CD8-positive, alpha-beta T cell (primary cell): ENCODE measurements at regions of chr7 and their contacts with region 1.

Region 1: GRCh38 chr7:75914730-75915585 is at the start of gene POR:
- DNase-seq: peak; percentile 94 to 99 (median 98)
- ATAC-seq: peak; percentile 94
- H3K4me3 ChIP-seq: peak within 1 kb of the TSS; percentile 98 to 99
- H3K4me3 Mint-ChIP-seq: peak within 1 kb of the TSS; percentile 92
- H3K27ac ChIP-seq: peak within 1 kb of the TSS; percentile 92 to 97
- H3K27ac Mint-ChIP-seq: peak within 1 kb of the TSS; percentile 96
- H3K4me1 ChIP-seq: peaks cover 24% of the 10 kb centered on the region
- H3K4me1 Mint-ChIP-seq: peaks cover 37% of the 10 kb centered on the region
- H3K27me3 ChIP-seq: no peaks in the 10 kb centered on the region
- H3K27me3 Mint-ChIP-seq: no peaks in the 10 kb centered on the region
- CTCF ChIP-seq: no peak
- total RNA-seq, gene POR: 64.4 to 66.7 TPM

Region 2: GRCh38 chr7:75878769-75879611 is 36.0 kb before region 1 on chr7 and contains the start of gene RHBDD2:
- CTCF ChIA-PET with region 1: no interaction called
- POLR2A ChIA-PET with region 1: interaction called, 33 read pairs
- intact Hi-C with region 1: loop called (anchors 1 kb)
- DNase-seq: peak; percentile 95 to 98 (median 97)
- ATAC-seq: peak; percentile 93
- H3K4me3 ChIP-seq: peak within 1 kb of the TSS; percentile 69 to 100
- H3K4me3 Mint-ChIP-seq: peak within 1 kb of the TSS; percentile 93
- H3K27ac ChIP-seq: peak within 1 kb of the TSS; percentile 73 to 88
- H3K27ac Mint-ChIP-seq: peak within 1 kb of the TSS; percentile 89
- H3K4me1 ChIP-seq: peaks cover 18% of the 10 kb centered on the region
- H3K4me1 Mint-ChIP-seq: peaks cover 34% of the 10 kb centered on the region
- H3K27me3 ChIP-seq: no peaks in the 10 kb centered on the region
- H3K27me3 Mint-ChIP-seq: no peaks in the 10 kb centered on the region
- CTCF ChIP-seq: no peak
- total RNA-seq, gene RHBDD2: 167 to 173 TPM

Region 3: DNA sequence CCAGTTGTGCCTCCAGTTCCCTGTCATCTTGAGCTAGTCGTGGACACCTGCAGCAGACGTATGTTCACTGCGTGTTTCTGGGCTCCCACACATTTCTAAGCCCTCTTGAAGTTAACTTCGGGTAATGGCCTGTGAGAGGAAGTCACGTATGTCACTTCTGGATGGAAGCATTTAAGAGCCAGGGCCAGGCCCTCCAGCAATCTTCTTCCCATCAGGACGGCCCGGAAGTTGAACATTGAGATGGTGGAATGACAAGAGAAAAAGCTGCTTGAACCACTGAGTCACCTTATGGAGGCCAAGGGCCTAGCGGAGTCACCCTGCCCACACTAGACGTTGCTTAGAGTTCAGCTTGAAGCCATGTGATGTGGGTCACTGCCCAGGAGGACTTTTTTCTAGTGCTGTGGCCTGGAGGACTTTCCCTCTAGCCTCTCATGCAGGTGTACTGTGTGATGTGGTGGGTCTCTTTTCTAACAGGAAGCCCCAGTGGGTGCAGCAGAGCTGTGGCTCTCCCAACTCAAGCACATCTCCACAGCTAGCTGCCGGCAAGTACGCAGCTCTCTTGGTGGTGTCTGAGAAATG is 13.5 kb after region 1 on chr7:
- CTCF ChIA-PET with region 1: interaction called, 4 read pairs
- POLR2A ChIA-PET with region 1: interaction called, 10 read pairs
- intact Hi-C with region 1: no loop called
- DNase-seq: peak in 7 of 9 experiments; percentile 6 to 74 (median 55)
- ATAC-seq: peak; percentile 89
- H3K4me3 ChIP-seq: no peak overlapping the region
- H3K4me3 Mint-ChIP-seq: peak overlapping the region; percentile 60
- H3K27ac ChIP-seq: no peak overlapping the region
- H3K27ac Mint-ChIP-seq: peak overlapping the region; percentile 85
- H3K4me1 ChIP-seq: peaks cover 19% of the 10 kb centered on the region
- H3K4me1 Mint-ChIP-seq: peaks cover 29% of the 10 kb centered on the region
- H3K27me3 ChIP-seq: no peaks in the 10 kb centered on the region
- H3K27me3 Mint-ChIP-seq: no peaks in the 10 kb centered on the region
- CTCF ChIP-seq: no peak

Region 4: DNA sequence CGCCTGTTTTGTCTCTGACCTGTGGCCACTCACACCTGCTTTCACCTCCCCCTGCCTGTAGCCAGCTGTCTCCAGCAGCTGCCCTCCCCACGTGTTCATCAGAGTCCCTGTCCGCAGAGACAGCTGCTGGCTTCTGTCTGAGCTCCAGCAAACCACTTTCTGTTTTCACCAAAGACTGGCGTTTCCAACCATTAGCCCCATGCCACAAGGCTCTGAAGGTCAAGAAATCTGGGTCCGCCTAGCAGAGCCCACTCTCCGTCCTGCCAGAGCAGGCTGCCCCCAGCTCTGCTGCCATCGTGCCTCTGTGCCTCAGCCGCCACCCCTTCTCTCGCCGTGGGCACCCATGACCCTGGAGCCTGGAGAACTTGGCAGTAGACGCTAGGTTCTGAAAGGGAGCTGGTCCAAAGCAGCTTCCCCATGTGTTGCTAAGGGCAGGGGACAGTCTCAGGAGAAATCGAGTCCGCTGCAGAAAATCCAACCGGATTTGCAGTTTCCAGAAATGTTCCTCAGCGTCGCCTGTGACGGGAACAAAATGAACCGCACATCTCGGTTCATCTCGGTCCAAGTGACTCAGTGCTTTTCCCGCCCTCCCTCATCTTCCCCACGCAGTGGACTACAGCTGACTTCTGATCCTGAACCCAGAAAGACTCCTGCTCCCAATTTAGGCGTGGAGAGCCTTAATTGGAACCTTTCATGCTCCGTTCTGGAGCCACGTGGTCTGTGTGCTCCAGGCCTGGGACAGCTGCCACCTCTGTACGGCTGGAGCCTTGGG is 51.4 kb after region 1 on chr7:
- CTCF ChIA-PET with region 1: interaction called, 3 read pairs
- POLR2A ChIA-PET with region 1: no interaction called
- intact Hi-C with region 1: loop called in 1 of 2 experiments (anchors 10 kb)
- DNase-seq: no peak
- ATAC-seq: no peak
- H3K4me3 ChIP-seq: no peak overlapping the region
- H3K4me3 Mint-ChIP-seq: no peak overlapping the region
- H3K27ac ChIP-seq: no peak overlapping the region
- H3K27ac Mint-ChIP-seq: no peak overlapping the region
- H3K4me1 ChIP-seq: no peaks in the 10 kb centered on the region
- H3K4me1 Mint-ChIP-seq: no peaks in the 10 kb centered on the region
- H3K27me3 ChIP-seq: no peaks in the 10 kb centered on the region
- H3K27me3 Mint-ChIP-seq: no peaks in the 10 kb centered on the region
- CTCF ChIP-seq: no peak